HEK293T (cell line): ENCODE measurements at regions of chr11 and their contacts with region 1.

Region 1: GRCh38 chr11:112223121-112223520 is 3.1 kb upstream of the PTS start:
- DNase-seq: no peak

Region 2: DNA sequence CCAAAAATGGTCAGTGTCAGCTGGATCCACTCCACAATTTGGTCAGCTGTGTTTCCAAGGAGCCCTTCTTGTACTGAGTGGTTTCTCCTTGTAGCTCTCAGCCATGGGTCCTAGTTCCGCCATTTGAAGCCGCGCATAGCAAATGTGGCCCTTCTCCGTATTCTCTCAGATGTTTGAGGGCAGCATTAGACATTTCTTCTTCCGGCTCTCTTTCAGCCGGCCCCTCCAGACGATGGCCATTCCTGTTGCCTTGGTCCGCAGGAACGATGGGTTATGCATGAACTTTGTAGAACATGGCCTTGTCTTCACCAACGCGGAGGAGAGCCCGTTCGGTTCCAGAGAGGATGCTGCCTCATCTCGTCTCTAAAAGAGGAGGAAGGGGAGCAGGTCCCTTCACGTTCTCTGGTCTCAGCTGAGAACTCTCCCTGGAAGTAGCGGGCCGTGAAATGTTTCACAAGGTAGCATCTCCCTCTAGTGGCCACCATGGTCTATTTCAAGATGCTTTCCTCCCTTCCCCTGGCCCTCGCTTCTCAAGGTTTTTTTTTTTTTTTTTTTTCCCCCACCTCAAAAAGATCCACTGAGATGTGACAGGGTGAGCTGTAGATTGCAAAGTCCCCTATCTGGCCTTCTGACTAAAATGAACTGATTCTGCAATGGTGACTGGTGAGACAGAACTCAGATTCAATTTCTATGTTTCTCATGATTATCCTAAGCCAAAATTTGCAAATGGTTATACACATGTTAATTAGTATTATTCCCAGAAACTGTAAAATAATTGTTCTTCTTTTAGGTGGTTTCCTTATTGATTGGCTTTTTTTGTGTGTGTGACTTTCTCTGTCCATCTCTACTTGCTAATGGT is 57.4 kb after region 1 on chr11:
- CTCF ChIA-PET with region 1: interaction called, 17 read pairs
- POLR2A ChIA-PET with region 1: interaction called, 8 read pairs
- DNase-seq: peak; percentile 79